Endothelial cell of umbilical vein (primary cell): ENCODE measurements at regions of chr12 and their contacts with region 1.

Region 1: GRCh38 chr12:70049600-70050360 is 193.5 kb upstream of the CNOT2 start:
- DNase-seq: no peak
- H3K4me3 ChIP-seq: no peak overlapping the region
- H3K27ac ChIP-seq: no peak overlapping the region
- H3K4me1 ChIP-seq: peaks cover 5% of the 10 kb centered on the region
- H3K27me3 ChIP-seq: no peaks in the 10 kb centered on the region
- CTCF ChIP-seq: no peak
- POLR2A ChIP-seq: no peak

Region 2: DNA sequence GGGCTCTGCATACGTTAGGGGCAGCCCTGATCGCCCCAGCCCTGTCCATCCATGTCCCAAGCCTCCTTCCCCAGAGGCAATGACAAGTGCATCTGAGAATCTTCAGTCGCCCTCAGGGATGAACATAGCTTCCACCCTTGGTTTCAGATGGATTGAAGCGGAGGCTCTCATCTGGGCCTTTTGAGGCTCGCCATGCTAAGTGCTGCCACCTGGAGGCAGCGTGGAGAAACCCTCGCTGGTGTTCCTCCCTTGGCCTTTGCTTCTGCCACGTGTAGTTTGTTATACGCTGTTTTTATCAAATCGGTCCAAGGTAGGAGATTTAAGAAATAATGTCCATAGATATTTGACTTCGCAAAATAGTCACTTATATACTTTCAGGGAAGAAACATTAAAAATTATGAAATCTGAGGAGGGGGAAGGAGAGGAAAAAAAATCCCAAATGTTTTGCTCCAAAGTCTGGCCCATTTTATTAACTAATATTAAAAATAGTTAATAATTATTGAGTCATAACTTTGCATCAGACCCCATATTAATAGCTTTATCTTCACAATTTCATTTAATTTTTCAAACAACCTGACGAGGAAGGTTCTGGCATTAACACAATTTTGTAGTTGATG is 410.3 kb before region 1 on chr12:
- CTCF ChIA-PET with region 1: no interaction called
- POLR2A ChIA-PET with region 1: no interaction called
- dilution Hi-C with region 1: no loop called
- intact Hi-C with region 1: no loop called
- DNase-seq: peak; percentile 66
- H3K4me3 ChIP-seq: no peak overlapping the region
- H3K27ac ChIP-seq: no peak overlapping the region
- H3K4me1 ChIP-seq: no peaks in the 10 kb centered on the region
- H3K27me3 ChIP-seq: no peaks in the 10 kb centered on the region
- CTCF ChIP-seq: peak; percentile 85 to 91
- POLR2A ChIP-seq: no peak

Region 3: DNA sequence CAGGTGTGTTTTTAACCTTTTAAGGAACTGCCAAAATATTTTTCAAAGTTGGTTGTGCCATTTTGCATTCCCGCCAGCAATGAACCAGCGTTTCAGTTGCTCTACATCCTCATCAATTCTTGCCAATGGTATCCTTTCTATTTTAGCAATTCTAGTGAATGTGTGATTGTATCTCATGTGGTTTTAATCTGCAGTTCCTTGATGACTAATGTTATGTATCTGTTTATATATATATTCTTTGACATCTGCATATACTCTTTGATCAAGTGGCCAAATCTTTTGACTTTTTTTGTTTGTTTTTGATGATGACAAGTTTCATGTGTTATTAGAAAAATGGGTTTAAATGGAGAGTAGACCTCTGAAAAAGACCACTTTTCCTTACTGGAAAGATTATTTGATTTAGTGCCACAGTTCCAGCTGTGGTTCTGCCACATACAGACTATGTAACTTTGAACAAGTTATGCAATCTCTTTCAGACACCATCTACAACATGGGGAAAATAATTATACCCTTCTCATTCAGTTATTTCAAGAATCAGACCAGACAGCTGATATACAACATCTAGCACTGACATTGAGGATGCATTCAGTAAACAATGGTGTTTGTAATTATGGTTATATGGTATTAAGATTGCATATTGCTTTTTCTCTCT is 47.1 kb after region 1 on chr12:
- CTCF ChIA-PET with region 1: no interaction called
- POLR2A ChIA-PET with region 1: no interaction called
- dilution Hi-C with region 1: no loop called
- intact Hi-C with region 1: no loop called
- DNase-seq: no peak
- H3K4me3 ChIP-seq: no peak overlapping the region
- H3K27ac ChIP-seq: no peak overlapping the region
- H3K4me1 ChIP-seq: no peaks in the 10 kb centered on the region
- H3K27me3 ChIP-seq: peaks cover 0 to 1% of the 10 kb centered on the region in 2 experiments
- CTCF ChIP-seq: no peak
- POLR2A ChIP-seq: no peak

Region 4: DNA sequence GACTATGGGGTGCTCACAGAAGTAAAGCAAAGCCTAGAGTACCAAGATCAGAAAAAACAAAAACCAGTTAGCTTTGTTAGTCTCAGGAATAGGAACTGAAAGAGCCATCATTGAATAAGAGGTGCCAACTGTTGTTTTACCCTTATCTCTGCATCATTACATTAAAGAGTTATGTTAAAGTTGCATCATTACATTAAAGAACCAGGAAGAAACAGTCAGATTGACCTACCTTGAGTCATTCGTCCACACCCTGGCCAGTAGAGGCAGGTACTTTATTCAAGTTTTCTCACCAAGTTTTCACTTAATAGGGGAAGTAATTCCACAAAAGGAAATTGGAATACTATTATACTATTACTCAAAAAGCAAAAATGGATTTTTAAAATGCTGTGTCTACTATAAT is 71.8 kb after region 1 on chr12:
- CTCF ChIA-PET with region 1: no interaction called
- POLR2A ChIA-PET with region 1: no interaction called
- dilution Hi-C with region 1: no loop called
- intact Hi-C with region 1: no loop called
- DNase-seq: no peak
- H3K4me3 ChIP-seq: no peak overlapping the region
- H3K27ac ChIP-seq: no peak overlapping the region
- H3K4me1 ChIP-seq: no peaks in the 10 kb centered on the region
- H3K27me3 ChIP-seq: peaks cover 0 to 3% of the 10 kb centered on the region in 2 experiments
- CTCF ChIP-seq: no peak
- POLR2A ChIP-seq: no peak

Region 5: DNA sequence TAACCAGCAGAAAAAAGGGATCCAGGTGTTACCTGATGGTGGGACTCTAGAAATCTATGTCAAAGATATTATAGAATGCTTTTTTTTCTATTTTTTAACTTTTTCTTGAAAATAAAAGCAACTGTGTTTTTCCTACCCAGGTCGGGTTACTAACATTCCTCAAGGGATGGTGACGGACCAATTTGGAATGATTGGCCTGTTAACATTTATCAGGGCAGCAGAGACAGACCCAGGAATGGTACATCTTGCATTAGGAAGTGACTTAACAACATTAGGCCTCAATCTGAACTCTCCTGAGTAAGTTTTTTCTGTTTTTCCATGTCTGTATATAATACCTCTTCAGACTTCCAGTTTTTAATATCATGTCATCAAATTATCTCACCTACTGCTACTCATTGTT is 288.7 kb after region 1 on chr12:
- CTCF ChIA-PET with region 1: no interaction called
- POLR2A ChIA-PET with region 1: no interaction called
- dilution Hi-C with region 1: no loop called
- intact Hi-C with region 1: loop called (anchors 10 kb)
- DNase-seq: no peak
- H3K4me3 ChIP-seq: no peak overlapping the region
- H3K27ac ChIP-seq: no peak overlapping the region
- H3K4me1 ChIP-seq: peaks cover under 1% of the 10 kb centered on the region
- H3K27me3 ChIP-seq: no peaks in the 10 kb centered on the region
- CTCF ChIP-seq: no peak
- POLR2A ChIP-seq: no peak